Activated CD4-positive, alpha-beta T cell treated with anti-CD3 and anti-CD28 coated beads for 36 hours (primary cell): ENCODE measurements at regions of chr1 and their contacts with region 1.

Region 1: DNA sequence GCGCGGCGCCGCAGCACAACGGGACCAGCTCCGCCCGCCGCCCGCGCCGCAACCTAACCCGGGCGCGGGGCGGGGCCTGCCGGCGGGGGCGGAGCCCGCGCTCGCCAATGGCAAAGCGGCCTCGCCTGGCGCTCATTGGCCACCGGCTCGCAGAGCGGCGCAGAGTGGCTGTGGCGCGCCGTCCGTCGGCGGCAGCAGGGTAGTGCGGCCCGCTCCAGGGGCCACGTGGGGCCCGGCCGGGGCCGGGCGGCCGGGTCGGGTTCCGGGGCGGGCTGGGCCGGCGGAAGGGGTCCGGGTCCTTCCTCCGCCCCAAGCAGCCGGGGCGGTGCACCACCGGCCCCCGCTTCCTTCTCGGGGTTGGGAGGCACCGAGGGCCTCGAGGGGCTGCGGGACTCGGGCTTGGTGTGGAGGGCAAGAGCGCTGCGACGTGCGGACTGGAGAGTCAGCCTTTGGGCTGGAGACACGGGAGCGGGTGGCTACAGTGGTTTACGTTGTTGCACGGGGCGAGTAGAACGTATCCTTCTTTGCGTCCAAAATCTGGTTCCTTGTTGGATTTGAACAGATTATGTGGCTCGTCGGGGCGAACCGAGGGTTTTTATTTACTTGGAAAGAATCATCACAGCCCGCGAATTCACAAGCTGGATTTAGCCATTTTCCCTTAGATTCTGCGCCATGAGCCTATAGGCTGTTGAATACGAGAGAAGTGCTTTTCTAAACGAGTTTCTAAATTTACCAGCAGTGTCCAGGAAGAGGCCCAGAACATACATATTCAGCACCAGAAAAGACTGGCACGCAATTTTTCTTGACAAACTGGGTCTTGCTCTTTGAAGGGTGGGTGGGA is at the start of gene SRM:
- DNase-seq: peak; percentile 95
- ATAC-seq: peak; percentile 98
- H3K4me3 Mint-ChIP-seq: peak within 1 kb of the TSS; percentile 93
- H3K27ac Mint-ChIP-seq: peak within 1 kb of the TSS; percentile 94
- H3K4me1 Mint-ChIP-seq: peaks cover 41% of the 10 kb centered on the region
- H3K27me3 Mint-ChIP-seq: no peaks in the 10 kb centered on the region
- total RNA-seq, gene SRM: 180 to 242 TPM

Region 2: DNA sequence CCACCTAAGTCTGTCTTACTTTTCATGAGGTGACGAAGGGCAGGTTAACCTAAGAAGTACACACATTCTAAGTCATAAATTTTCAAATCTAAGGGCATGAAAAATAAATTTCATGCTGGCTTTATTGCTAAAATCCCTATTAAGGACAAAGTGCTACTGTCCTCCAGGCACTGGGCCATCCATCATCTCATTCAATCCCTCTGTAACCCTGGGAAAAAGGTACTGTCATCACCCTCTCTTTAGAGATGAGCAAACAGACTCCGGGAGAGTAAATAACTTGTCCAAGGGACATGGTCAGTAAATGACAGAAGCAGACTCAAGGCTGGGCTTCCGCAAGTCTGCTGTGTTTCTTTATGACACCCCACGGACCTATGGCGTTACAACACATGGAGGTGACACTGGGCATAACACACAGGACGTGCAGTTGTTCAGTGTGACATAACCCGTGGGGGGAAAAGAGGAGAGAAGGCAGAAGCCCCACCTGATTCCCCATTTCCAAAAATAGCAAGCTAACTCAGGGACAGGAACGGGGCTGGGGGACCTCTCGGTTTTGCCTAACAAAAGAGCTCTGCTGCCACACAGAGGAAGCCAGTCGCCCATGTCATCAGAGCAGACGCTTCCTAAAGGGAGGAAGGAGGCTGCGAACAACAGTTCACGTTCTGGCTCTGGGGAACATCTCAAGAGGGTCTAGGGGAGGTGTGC is 12.2 kb after region 1 on chr1:
- CTCF ChIA-PET with region 1: interaction called, 6 read pairs
- POLR2A ChIA-PET with region 1: interaction called, 3 read pairs
- intact Hi-C with region 1: loop called in 1 of 2 experiments (anchors 1 kb)
- DNase-seq: no peak
- ATAC-seq: no peak
- H3K4me3 Mint-ChIP-seq: no peak overlapping the region
- H3K27ac Mint-ChIP-seq: no peak overlapping the region
- H3K4me1 Mint-ChIP-seq: peaks cover 9% of the 10 kb centered on the region
- H3K27me3 Mint-ChIP-seq: no peaks in the 10 kb centered on the region

Region 3: GRCh38 chr1:11272832-11273594 is 212.8 kb after region 1 on chr1 and contains the start of gene UBIAD1:
- CTCF ChIA-PET with region 1: no interaction called
- POLR2A ChIA-PET with region 1: interaction called, 3 read pairs
- intact Hi-C with region 1: loop called in 1 of 2 experiments (anchors 1 kb)
- DNase-seq: peak; percentile 95
- ATAC-seq: peak; percentile 84
- H3K4me3 Mint-ChIP-seq: peak within 1 kb of the TSS; percentile 95
- H3K27ac Mint-ChIP-seq: peak within 1 kb of the TSS; percentile 91
- H3K4me1 Mint-ChIP-seq: peaks cover 29% of the 10 kb centered on the region
- H3K27me3 Mint-ChIP-seq: no peaks in the 10 kb centered on the region
- total RNA-seq, gene UBIAD1: 29.2 to 32.0 TPM